ENCODE measurements at regions of chr5 and their contacts with region 1.

Region 1: GRCh38 chr5:143128412-143129071 is 274.9 kb downstream of the NR3C1 start:
- DNase-seq: no peak
- H3K4me3 ChIP-seq: no peak overlapping the region
- H3K27ac ChIP-seq: no peak overlapping the region
- H3K4me1 ChIP-seq: peaks cover 8% of the 10 kb centered on the region
- CTCF ChIP-seq: no peak

Region 2: DNA sequence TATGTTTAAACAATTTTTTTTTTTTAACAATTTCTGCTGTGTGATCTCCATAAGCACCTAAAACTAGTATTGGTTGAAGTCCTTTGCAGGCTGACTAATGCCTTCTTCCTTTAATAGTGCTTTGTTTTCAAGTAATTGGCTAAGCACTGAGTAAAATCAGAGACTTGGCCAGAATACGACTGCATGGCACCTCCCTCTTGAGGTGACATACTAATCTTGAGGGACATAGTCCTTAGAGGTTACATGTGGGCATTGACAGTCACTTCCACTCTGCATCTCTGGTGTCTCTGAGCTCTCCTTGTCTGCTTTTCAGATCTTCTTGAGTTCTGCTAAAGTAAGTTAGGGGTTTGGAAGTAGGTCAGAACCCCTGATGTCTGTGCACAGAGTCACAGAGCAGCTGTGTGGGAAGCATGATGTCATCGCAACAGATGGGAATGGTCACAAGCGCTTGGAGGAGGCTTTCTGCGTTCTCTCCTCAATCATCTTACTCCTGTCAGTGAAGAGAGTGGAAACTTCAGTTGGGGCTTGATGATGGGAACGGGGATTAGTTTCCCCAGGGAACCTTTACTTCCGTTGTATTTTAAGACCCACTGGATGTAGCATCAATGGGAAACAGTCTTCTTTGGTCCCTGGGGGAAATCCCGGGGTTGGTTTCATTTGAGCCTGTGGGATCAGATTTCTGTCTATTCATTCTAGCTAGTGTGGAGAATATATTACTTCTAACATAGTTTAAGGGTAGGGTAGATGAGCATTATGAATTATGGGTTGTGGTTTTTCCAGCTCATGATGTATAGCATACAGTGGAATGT is 221.5 kb before region 1 on chr5:
- CTCF ChIA-PET with region 1: no interaction called
- POLR2A ChIA-PET with region 1: no interaction called
- intact Hi-C with region 1: no loop called
- DNase-seq: no peak
- H3K4me3 ChIP-seq: no peak overlapping the region
- H3K27ac ChIP-seq: no peak overlapping the region
- H3K4me1 ChIP-seq: no peaks in the 10 kb centered on the region
- CTCF ChIP-seq: no peak

Region 3: GRCh38 chr5:143094087-143094521 is 34.4 kb before region 1 on chr5:
- CTCF ChIA-PET with region 1: no interaction called
- POLR2A ChIA-PET with region 1: no interaction called
- intact Hi-C with region 1: no loop called
- DNase-seq: no peak
- H3K4me3 ChIP-seq: no peak overlapping the region
- H3K27ac ChIP-seq: no peak overlapping the region
- H3K4me1 ChIP-seq: no peaks in the 10 kb centered on the region
- CTCF ChIP-seq: no peak

Region 4: DNA sequence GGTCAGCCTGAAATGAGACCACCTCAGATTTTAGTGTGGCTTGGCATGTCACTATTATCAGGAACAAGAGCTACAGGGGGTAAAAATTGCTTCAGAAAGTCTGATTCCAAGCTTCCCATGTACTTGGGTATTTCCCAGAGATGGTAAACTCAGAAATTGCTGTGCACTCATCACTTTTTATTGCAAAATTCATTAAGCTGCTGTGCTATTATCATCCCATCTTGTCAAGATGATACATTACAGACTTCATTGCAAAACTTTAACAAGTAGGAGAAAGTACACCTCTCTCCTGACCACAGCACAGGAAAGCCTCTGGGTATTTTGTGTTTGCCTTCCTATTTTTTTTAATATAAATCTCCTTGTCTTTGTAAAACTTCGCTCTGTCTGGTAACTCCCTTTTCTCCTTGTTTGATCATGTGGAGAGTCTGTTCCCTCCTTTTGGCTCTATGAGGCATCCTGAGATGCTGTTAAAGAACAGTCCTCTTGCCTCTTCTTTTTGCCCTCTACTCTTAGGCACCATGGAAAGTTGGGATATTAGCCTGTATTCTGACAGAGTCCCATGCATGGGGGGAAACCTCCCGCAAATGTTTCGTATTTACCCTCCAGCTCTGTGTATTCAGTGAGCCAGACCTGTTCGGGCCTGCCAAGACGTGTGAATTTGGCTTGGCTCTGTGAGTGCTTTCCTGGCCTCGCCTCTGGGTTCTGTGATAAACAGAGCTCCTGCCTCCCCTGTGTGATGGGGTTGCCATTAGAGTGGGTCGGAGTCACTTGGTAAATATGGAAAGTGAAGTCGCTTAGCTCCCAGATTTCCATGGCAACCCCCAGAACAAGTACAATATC is 14.3 kb after region 1 on chr5:
- CTCF ChIA-PET with region 1: no interaction called
- POLR2A ChIA-PET with region 1: interaction called, 10 read pairs
- intact Hi-C with region 1: no loop called
- DNase-seq: no peak
- H3K4me3 ChIP-seq: no peak overlapping the region
- H3K27ac ChIP-seq: no peak overlapping the region
- H3K4me1 ChIP-seq: no peaks in the 10 kb centered on the region
- CTCF ChIP-seq: no peak

Region 5: DNA sequence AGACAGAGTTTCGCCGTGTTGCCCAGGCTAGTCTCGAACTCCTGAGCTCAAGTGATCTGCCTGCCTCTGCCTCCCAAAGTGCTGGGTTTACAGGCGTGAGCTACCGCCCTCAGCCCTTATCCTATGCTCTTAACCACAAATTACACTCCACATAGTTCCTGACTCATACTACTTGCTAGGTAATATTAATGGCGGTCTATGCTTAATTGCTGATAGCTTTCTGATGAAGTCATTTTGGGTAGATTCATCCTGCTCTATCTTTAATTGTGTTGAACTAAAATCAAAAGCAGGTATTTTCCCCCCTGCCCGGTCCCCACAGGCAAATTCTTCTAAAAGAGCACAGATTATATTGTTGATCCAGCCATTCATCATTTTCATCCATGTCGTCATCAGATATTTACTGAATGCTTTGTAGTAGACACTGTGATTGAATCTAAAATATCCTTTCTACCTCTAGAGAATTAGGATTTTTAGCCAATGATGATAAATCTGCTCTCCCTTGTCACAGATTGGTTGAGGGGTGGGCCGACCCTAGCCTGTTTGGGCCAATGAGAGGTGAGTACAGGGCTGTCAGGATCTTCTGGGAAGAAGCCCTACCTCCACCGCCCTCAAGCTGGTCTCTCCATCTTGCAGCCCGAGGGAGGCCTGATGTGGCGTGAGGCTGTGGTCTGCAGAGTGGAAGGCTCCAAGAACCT is 130.2 kb after region 1 on chr5:
- CTCF ChIA-PET with region 1: no interaction called
- POLR2A ChIA-PET with region 1: interaction called, 14 read pairs
- intact Hi-C with region 1: no loop called
- DNase-seq: no peak
- H3K4me3 ChIP-seq: no peak overlapping the region
- H3K27ac ChIP-seq: no peak overlapping the region
- H3K4me1 ChIP-seq: no peaks in the 10 kb centered on the region
- CTCF ChIP-seq: no peak

Measured in OCI-LY7 (cell line).